Common myeloid progenitor, CD34-positive (primary cell): ENCODE measurements at regions of chr12 and their contacts with region 1.

Region 1: GRCh38 chr12:96132819-96133218 is 61.4 kb upstream of the ELK3 start:
- DNase-seq: peak; percentile 72 to 86 (median 85)
- H3K4me3 ChIP-seq: no peak overlapping the region
- H3K27ac ChIP-seq: no peak overlapping the region
- H3K4me1 ChIP-seq: peaks cover 4 to 21% (median 10%) of the 10 kb centered on the region in 4 experiments
- H3K27me3 ChIP-seq: no peaks in the 10 kb centered on the region

Region 2: GRCh38 chr12:95265765-95266164 is 867.1 kb before region 1 on chr12:
- CTCF ChIA-PET with region 1: no interaction called
- POLR2A ChIA-PET with region 1: no interaction called
- DNase-seq: no peak
- H3K4me3 ChIP-seq: no peak overlapping the region
- H3K27ac ChIP-seq: no peak overlapping the region
- H3K4me1 ChIP-seq: no peaks in the 10 kb centered on the region
- H3K27me3 ChIP-seq: no peaks in the 10 kb centered on the region

Region 3: DNA sequence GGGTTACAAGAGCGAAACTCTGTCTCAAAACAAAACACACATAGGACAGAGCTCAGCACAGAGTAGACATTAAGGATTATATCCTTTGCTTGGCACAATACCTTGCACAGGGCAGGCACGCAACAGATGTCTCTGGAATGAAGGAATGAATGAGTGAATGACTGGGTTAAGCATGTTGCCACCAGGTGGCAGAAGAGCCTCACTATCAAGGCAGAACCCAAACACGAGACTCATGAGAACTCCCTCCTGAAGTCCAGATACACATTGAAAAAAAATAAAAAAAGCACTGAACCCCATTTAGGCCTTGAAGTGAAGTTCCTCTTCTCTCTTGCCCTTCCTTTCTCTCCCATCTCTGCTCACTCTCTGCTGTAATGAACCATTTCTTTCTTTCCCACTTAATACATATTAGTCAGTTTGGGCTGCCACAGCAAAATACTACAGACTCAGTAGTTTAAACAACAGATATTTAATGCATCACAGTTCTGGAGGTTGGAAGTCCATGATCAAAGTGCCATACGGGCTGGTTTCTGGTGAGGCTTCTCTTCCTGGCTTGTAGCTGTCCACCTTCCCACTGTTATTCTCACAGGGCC is 70.9 kb before region 1 on chr12:
- CTCF ChIA-PET with region 1: interaction called, 34 read pairs
- POLR2A ChIA-PET with region 1: no interaction called
- DNase-seq: peak; percentile 93 to 97 (median 95)
- H3K4me3 ChIP-seq: no peak overlapping the region
- H3K27ac ChIP-seq: no peak overlapping the region
- H3K4me1 ChIP-seq: peaks cover 5 to 20% (median 14%) of the 10 kb centered on the region in 4 experiments
- H3K27me3 ChIP-seq: no peaks in the 10 kb centered on the region

Region 4: GRCh38 chr12:96108321-96108720 is 24.5 kb before region 1 on chr12:
- CTCF ChIA-PET with region 1: interaction called, 11 read pairs
- POLR2A ChIA-PET with region 1: no interaction called
- DNase-seq: peak; percentile 58 to 90 (median 85)
- H3K4me3 ChIP-seq: peak overlapping the region in 4 of 7 experiments; percentile 3 to 40 (median 24)
- H3K27ac ChIP-seq: no peak overlapping the region
- H3K4me1 ChIP-seq: peaks cover 12 to 69% (median 37%) of the 10 kb centered on the region in 4 experiments
- H3K27me3 ChIP-seq: no peaks in the 10 kb centered on the region

Region 5: DNA sequence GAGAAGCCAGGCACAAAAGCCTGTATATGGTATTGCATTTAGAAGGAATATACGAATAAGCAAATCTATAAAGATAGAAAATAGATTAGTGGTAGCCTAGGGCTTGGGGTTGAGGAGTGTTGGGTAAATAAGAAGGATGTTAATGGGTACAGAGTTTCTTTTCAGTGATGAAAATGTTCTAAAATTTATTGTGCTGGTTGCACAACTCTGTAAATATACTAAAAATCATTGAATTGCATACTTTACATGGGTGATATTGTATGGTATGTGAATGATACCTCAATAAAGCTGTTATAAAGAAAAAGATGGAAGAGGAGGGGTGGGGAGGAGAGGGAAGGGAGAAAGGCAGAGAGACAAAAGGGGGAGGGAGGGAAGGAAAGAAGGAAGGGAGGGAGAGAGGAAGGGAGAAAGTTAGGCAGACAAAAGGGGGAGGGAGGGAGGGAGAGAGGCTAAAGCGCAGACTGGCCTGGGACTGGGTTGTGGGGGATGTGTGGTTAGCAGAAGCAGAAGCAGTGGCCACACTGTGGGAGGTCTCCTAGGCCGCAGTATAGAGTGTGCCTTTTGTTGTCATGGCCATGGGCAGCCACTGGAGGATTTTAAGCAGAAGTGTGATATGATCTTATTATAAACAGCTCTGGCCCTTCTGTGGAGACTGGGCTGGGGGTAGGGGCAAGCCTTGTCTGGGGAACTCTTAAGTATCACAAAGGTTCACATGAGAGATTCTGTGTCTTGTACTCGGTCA is 12.3 kb before region 1 on chr12:
- CTCF ChIA-PET with region 1: interaction called, 26 read pairs
- POLR2A ChIA-PET with region 1: no interaction called
- DNase-seq: peak; percentile 86 to 97 (median 97)
- H3K4me3 ChIP-seq: peak overlapping the region in 2 of 7 experiments; percentile 4 to 61
- H3K27ac ChIP-seq: peak overlapping the region; percentile 27 to 59
- H3K4me1 ChIP-seq: peaks cover 8 to 35% (median 24%) of the 10 kb centered on the region in 4 experiments
- H3K27me3 ChIP-seq: no peaks in the 10 kb centered on the region

Region 6: GRCh38 chr12:96208801-96209549 is 76.2 kb after region 1 on chr12:
- CTCF ChIA-PET with region 1: interaction called, 14 read pairs
- POLR2A ChIA-PET with region 1: no interaction called
- DNase-seq: peak; percentile 18 to 84 (median 81)
- H3K4me3 ChIP-seq: peak overlapping the region in 1 of 7 experiments; percentile 36
- H3K27ac ChIP-seq: peak overlapping the region in 1 of 2 experiments; percentile 19
- H3K4me1 ChIP-seq: peaks cover 40 to 93% (median 75%) of the 10 kb centered on the region in 4 experiments
- H3K27me3 ChIP-seq: no peaks in the 10 kb centered on the region

Region 7: GRCh38 chr12:96219698-96220206 is 86.9 kb after region 1 on chr12:
- CTCF ChIA-PET with region 1: interaction called, 43 read pairs
- POLR2A ChIA-PET with region 1: interaction called, 5 read pairs
- DNase-seq: no peak
- H3K4me3 ChIP-seq: no peak overlapping the region
- H3K27ac ChIP-seq: peak overlapping the region in 1 of 2 experiments; percentile 3
- H3K4me1 ChIP-seq: peaks cover 19 to 43% (median 33%) of the 10 kb centered on the region in 4 experiments
- H3K27me3 ChIP-seq: no peaks in the 10 kb centered on the region